ENCODE measurements at regions of chr1 and their contacts with region 1.

Region 1: DNA sequence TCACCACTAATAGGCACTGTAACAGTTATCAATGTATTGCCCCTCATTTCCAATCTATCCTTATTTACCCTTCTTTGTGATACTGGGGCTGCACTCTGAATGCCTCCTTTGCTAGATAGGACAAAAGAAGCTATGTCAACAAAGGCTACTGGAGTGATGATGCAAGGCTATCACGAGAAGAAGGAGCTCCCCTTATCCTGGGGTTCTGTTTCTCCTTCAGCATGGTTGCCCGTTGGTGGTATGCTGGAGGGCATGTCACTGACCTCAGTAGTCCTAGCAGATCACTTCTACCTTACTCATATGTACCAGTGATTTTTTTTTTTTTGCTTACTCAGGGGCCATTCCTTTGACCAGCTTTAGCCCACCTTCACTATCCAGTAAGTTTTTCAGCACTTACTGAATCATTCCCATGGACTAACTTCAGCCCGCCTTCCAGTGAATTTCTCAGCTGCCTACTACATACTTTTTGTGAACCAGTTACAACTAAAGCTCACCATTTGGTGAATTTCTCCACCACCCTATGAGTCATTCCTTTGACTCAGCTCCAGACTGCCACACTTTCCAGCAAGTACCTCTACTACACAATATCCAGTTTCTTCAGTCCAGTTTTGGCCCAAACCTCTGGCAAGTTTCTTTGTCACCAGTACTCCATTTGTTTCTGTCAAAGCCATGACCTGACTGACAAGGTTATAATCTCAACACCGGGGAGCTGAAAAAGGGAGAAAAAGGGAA is 944.5 kb downstream of the KCNT2 start:
- DNase-seq: peak; percentile 94
- ATAC-seq: peak; percentile 87
- H3K4me3 ChIP-seq: no peak overlapping the region
- H3K27ac ChIP-seq: peak overlapping the region; percentile 46; the same call in 1 of the 2 replicates
- H3K4me1 ChIP-seq: peaks cover 4% of the 10 kb centered on the region
- H3K27me3 ChIP-seq: no peaks in the 10 kb centered on the region
- CTCF ChIP-seq: no peak
- POLR2A ChIP-seq: no peak
- RAD21 ChIP-seq: no peak

Region 2: DNA sequence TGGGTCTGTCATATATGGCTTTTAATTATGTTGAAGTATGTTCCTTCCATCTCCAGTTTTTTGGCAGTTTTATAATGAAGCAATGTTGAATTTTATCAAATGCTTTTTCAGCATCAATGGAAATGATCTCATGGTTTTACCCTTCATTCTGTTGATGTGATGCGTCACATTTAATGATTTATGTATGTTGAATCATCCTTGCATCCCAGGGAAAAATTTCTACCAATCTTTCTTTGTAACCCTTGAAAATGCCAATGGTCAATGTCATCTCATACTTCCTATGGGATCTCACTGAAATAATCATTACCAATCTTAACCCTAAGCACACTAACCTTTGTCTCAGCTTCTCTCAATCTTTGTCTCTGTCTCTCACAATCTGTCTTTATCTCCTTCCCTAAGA is 59.4 kb before region 1 on chr1:
- CTCF ChIA-PET with region 1: no interaction called
- POLR2A ChIA-PET with region 1: no interaction called
- dilution Hi-C with region 1: no loop called
- in situ Hi-C with region 1: no loop called
- intact Hi-C with region 1: loop called (anchors 5 kb)
- DNase-seq: peak; percentile 93
- ATAC-seq: peak; percentile 76
- H3K4me3 ChIP-seq: no peak overlapping the region
- H3K27ac ChIP-seq: peak overlapping the region; percentile 29; the same call in 1 of the 2 replicates
- H3K4me1 ChIP-seq: no peaks in the 10 kb centered on the region
- H3K27me3 ChIP-seq: no peaks in the 10 kb centered on the region
- CTCF ChIP-seq: no peak
- POLR2A ChIP-seq: no peak
- RAD21 ChIP-seq: no peak

Region 3: GRCh38 chr1:196059210-196059609 is 395.5 kb after region 1 on chr1:
- CTCF ChIA-PET with region 1: no interaction called
- POLR2A ChIA-PET with region 1: no interaction called
- dilution Hi-C with region 1: no loop called
- in situ Hi-C with region 1: no loop called
- intact Hi-C with region 1: no loop called
- DNase-seq: no peak
- ATAC-seq: no peak
- H3K4me3 ChIP-seq: no peak overlapping the region
- H3K27ac ChIP-seq: no peak overlapping the region
- H3K4me1 ChIP-seq: no peaks in the 10 kb centered on the region
- H3K27me3 ChIP-seq: no peaks in the 10 kb centered on the region
- CTCF ChIP-seq: no peak
- POLR2A ChIP-seq: no peak
- RAD21 ChIP-seq: no peak